Naive thymus-derived CD4-positive, alpha-beta T cell (primary cell): ENCODE measurements at regions of chr20 and their contacts with region 1.

Region 1: DNA sequence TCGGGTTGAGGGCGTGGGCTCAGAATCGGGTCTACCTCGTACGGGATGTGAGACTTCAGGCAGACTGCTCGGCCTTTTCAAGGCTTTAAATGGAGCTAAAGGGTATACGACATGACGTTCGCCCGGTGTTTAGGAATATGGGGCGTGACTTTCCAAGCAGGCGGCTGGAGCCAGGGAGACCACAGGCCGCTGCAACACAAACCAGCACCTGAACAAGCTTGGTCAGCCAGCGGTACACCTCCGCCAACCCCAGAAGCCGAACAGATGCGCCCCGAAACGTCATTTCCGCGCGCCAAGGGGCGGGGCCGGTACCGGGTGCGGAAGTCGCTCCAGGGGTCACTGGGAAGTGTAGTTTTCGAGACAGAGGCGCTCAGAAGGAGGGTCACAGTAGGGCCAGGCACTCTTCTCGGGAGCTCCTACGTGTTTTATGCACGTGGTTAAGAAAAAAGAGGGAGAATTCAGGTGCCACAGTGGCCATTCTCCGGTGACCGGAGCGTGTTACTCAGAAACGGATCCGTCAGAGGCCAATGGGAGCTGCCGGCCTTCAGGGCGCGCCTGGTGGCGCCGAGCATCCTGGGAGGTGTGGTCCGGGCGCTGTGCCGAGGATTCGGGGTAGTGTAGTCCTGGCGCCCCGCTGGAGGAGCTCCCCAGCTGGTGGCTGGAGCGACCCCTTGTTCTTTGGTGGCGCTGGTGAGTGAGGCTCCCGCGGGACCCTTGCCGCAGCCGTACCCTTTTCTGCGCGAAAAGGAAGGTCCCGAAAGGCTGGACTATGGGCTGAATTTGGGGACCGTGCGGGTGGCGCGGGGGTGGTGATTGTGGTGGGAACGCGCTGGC is at the start of gene ZNF133:
- DNase-seq: peak; percentile 96 to 100 (median 98)
- ATAC-seq: peak; percentile 96
- H3K4me3 ChIP-seq: peak within 1 kb of the TSS; percentile 91
- H3K4me3 Mint-ChIP-seq: peak within 1 kb of the TSS; percentile 93 to 99 (median 98)
- H3K27ac ChIP-seq: peak within 1 kb of the TSS; percentile 96
- H3K27ac Mint-ChIP-seq: peak within 1 kb of the TSS; percentile 98 to 100 (median 99)
- H3K4me1 ChIP-seq: peaks cover 4 to 10% of the 10 kb centered on the region in 2 donors
- H3K4me1 Mint-ChIP-seq: peaks cover 16 to 51% (median 35%) of the 10 kb centered on the region in 7 donors
- H3K27me3 ChIP-seq: peaks cover 0 to 7% of the 10 kb centered on the region in 2 donors
- H3K27me3 Mint-ChIP-seq: peaks cover 14 to 30% (median 20%) of the 10 kb centered on the region in 5 donors
- total RNA-seq, gene ZNF133: 6.5 to 11.5 (median 9.4) TPM

Region 2: GRCh38 chr20:16573001-16573965 is 1714.8 kb before region 1 on chr20 and contains the start of gene KIF16B:
- CTCF ChIA-PET with region 1: no interaction called
- POLR2A ChIA-PET with region 1: interaction called, 3 read pairs
- intact Hi-C with region 1: loop called in 1 of 2 experiments (anchors 5 kb)
- DNase-seq: peak; percentile 62 to 97 (median 76)
- ATAC-seq: peak; percentile 88
- H3K4me3 ChIP-seq: peak within 1 kb of the TSS; percentile 78
- H3K4me3 Mint-ChIP-seq: peak within 1 kb of the TSS; percentile 88 to 97 (median 92)
- H3K27ac ChIP-seq: peak within 1 kb of the TSS; percentile 61
- H3K27ac Mint-ChIP-seq: peak within 1 kb of the TSS; percentile 52 to 90 (median 85)
- H3K4me1 ChIP-seq: peaks cover 9 to 11% of the 10 kb centered on the region in 2 donors
- H3K4me1 Mint-ChIP-seq: peaks cover 16 to 61% (median 50%) of the 10 kb centered on the region in 7 donors
- H3K27me3 ChIP-seq: no peaks in the 10 kb centered on the region
- H3K27me3 Mint-ChIP-seq: peaks cover 0 to 8% (median 0%) of the 10 kb centered on the region in 5 donors
- total RNA-seq, gene KIF16B: 8.4 to 13.7 (median 11.0) TPM

Region 3: GRCh38 chr20:17536944-17537444 is 751.1 kb before region 1 on chr20:
- CTCF ChIA-PET with region 1: no interaction called
- POLR2A ChIA-PET with region 1: no interaction called
- intact Hi-C with region 1: loop called in 1 of 2 experiments (anchors 10 kb)
- DNase-seq: peak; percentile 22 to 73 (median 65)
- ATAC-seq: peak; percentile 98
- H3K4me3 ChIP-seq: no peak overlapping the region
- H3K4me3 Mint-ChIP-seq: no peak overlapping the region
- H3K27ac ChIP-seq: no peak overlapping the region
- H3K27ac Mint-ChIP-seq: peak overlapping the region in 2 of 9 donors; percentile 50 to 52
- H3K4me1 ChIP-seq: peaks cover 0 to under 1% of the 10 kb centered on the region in 2 donors
- H3K4me1 Mint-ChIP-seq: peaks cover 0 to 39% (median 0%) of the 10 kb centered on the region in 7 donors
- H3K27me3 ChIP-seq: no peaks in the 10 kb centered on the region
- H3K27me3 Mint-ChIP-seq: peaks cover 10 to 30% (median 18%) of the 10 kb centered on the region in 5 donors

Region 4: GRCh38 chr20:18276821-18277220 is 11.3 kb before region 1 on chr20:
- CTCF ChIA-PET with region 1: interaction called, 3 read pairs
- POLR2A ChIA-PET with region 1: interaction called, 3 read pairs
- intact Hi-C with region 1: loop called in 1 of 2 experiments (anchors 1 kb)
- DNase-seq: peak in 8 of 9 donors; percentile 12 to 62 (median 36)
- ATAC-seq: peak; percentile 74
- H3K4me3 ChIP-seq: no peak overlapping the region
- H3K4me3 Mint-ChIP-seq: no peak overlapping the region
- H3K27ac ChIP-seq: no peak overlapping the region
- H3K27ac Mint-ChIP-seq: no peak overlapping the region
- H3K4me1 ChIP-seq: no peaks in the 10 kb centered on the region
- H3K4me1 Mint-ChIP-seq: peaks cover 0 to 6% (median 0%) of the 10 kb centered on the region in 7 donors
- H3K27me3 ChIP-seq: peaks cover 2 to 4% of the 10 kb centered on the region in 2 donors
- H3K27me3 Mint-ChIP-seq: peaks cover 43 to 67% (median 50%) of the 10 kb centered on the region in 5 donors

Region 5: DNA sequence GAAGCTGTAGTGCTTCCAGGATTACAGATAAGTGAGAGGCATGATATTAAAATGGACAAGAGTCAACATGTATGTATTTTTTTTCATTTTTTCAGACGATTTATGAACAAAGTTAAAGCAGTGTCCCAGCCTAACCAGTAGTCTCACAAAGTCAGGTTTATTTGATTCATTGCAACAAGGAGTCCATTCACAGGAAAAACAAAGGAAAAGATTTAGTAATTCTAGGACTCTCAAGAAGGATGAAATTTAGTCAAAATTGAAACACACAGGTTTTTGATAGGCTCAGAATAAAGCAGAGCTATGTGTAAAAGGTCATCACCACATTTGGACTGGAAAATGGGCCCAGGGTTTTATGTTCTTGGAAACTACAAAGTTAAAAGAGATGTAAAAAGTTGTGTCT is 84.2 kb after region 1 on chr20:
- CTCF ChIA-PET with region 1: no interaction called
- POLR2A ChIA-PET with region 1: no interaction called
- intact Hi-C with region 1: no loop called
- DNase-seq: no peak
- ATAC-seq: no peak
- H3K4me3 ChIP-seq: no peak overlapping the region
- H3K4me3 Mint-ChIP-seq: no peak overlapping the region
- H3K27ac ChIP-seq: no peak overlapping the region
- H3K27ac Mint-ChIP-seq: no peak overlapping the region
- H3K4me1 ChIP-seq: no peaks in the 10 kb centered on the region
- H3K4me1 Mint-ChIP-seq: no peaks in the 10 kb centered on the region
- H3K27me3 ChIP-seq: no peaks in the 10 kb centered on the region
- H3K27me3 Mint-ChIP-seq: peaks cover 4 to 23% (median 12%) of the 10 kb centered on the region in 5 donors

Region 6: DNA sequence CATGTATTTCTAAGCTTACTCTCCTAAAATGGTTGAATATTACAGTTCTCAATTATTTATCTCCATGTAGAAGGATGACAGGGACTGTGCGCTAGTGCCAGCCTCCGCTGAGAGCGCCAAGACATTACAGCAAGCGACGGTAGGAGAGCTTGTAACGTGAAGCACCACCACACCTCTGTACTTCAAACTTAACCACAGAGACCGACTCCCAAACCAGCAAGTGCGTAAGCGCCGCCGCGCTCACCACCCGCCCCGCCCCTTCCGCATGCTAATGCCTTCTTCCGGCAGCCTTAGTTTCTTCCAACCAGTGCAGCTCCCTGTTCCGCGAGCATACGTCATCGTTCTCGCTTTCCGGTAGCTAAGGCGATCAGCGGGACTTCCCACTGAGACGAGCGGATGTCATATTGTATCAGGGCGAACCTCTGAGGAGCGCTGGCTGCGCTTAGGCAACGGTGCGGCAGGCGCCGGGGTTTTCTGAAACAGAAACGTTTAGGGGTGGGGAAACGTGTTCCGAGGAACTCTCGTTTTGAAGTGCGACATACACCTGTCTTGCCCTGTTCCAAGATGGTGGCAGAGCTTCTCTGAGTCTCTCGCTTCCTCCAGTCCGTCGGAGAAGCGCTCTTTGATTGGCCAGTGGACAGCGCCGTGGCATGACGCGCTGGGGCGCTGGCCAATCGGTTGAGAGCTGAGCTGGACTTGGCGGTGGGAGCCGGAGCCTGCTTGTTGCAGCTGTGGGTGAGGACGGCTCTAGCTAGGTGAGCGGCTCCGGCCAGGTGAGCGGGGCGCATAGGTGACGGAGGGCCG is 219.3 kb after region 1 on chr20 and contains the start of gene SEC23B:
- CTCF ChIA-PET with region 1: no interaction called
- POLR2A ChIA-PET with region 1: interaction called, 23 read pairs
- intact Hi-C with region 1: loop called (anchors 1 kb)
- DNase-seq: peak; percentile 88 to 100 (median 99)
- ATAC-seq: peak; percentile 91
- H3K4me3 ChIP-seq: peak within 1 kb of the TSS; percentile 74
- H3K4me3 Mint-ChIP-seq: peak within 1 kb of the TSS; percentile 91 to 100 (median 100)
- H3K27ac ChIP-seq: peak within 1 kb of the TSS; percentile 90
- H3K27ac Mint-ChIP-seq: peak within 1 kb of the TSS; percentile 99 to 100 (median 100)
- H3K4me1 ChIP-seq: peaks cover 17 to 28% of the 10 kb centered on the region in 2 donors
- H3K4me1 Mint-ChIP-seq: peaks cover 25 to 59% (median 50%) of the 10 kb centered on the region in 7 donors
- H3K27me3 ChIP-seq: no peaks in the 10 kb centered on the region
- H3K27me3 Mint-ChIP-seq: peaks cover 0 to 2% (median 0%) of the 10 kb centered on the region in 5 donors
- total RNA-seq, gene SEC23B: 39.0 to 102 (median 40.9) TPM

Region 7: GRCh38 chr20:18793625-18794427 is 505.7 kb after region 1 on chr20:
- CTCF ChIA-PET with region 1: no interaction called
- POLR2A ChIA-PET with region 1: interaction called, 12 read pairs
- intact Hi-C with region 1: loop called in 1 of 2 experiments (anchors 1 kb)
- DNase-seq: peak; percentile 62 to 94 (median 87)
- ATAC-seq: peak; percentile 99
- H3K4me3 ChIP-seq: peak overlapping the region; percentile 87
- H3K4me3 Mint-ChIP-seq: peak overlapping the region; percentile 85 to 99 (median 96)
- H3K27ac ChIP-seq: peak overlapping the region; percentile 92
- H3K27ac Mint-ChIP-seq: peak overlapping the region; percentile 97 to 100 (median 99)
- H3K4me1 ChIP-seq: peaks cover 8% of the 10 kb centered on the region in 2 donors
- H3K4me1 Mint-ChIP-seq: peaks cover 0 to 24% (median 18%) of the 10 kb centered on the region in 7 donors
- H3K27me3 ChIP-seq: no peaks in the 10 kb centered on the region
- H3K27me3 Mint-ChIP-seq: peaks cover 11 to 26% (median 21%) of the 10 kb centered on the region in 5 donors